Dendritic cell treated with granulocyte-macrophage colony-stimulating factor and Interleukin-4, amounts not matched to agents 40 ng/mL and 50 ng/mL, for 4 days (primary cell): ENCODE measurements at regions of chr1 and their contacts with region 1.

Region 1: DNA sequence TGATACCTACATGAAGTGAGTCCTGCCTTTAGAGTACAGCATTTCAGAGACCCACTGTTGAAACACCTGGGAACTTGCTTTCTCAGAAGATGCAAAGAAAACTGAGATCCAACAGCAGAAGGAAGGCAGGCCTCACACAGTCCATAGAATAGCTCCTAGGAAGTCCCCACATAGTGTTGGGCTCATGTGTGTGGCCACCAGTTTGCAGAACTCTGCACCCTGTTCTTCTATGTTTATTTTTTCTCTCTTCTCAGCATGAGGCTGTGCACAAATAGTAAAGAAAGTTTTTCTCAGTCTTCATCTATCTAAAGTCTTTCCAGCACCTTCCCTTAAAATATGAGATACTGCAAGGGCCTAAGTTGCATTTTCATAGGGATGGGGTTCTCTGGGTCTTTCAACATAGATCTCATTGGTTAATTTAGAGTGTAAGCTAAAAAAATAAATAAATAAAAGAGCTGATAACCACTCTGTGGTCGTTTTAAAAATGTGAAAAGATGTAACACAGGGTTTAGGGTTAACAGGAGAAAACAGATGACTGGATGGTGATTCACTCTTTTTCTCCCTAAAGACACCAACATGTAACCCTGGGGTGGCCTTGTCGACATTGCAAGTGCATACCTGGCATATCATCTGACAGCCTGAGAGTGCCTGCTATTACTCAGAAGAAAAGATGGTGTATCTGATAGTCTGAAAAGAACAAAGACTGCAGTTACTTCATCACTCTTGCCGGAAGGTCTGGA is 94.6 kb downstream of the ZC3H11B start:
- H3K4me3 Mint-ChIP-seq: no peak overlapping the region
- H3K27ac Mint-ChIP-seq: no peak overlapping the region
- H3K4me1 Mint-ChIP-seq: peaks cover 7% of the 10 kb centered on the region
- H3K27me3 Mint-ChIP-seq: peaks cover 9% of the 10 kb centered on the region

Region 2: GRCh38 chr1:219010720-219011119 is 507.6 kb before region 1 on chr1:
- intact Hi-C with region 1: no loop called
- H3K4me3 Mint-ChIP-seq: no peak overlapping the region
- H3K27ac Mint-ChIP-seq: no peak overlapping the region
- H3K4me1 Mint-ChIP-seq: no peaks in the 10 kb centered on the region
- H3K27me3 Mint-ChIP-seq: no peaks in the 10 kb centered on the region

Region 3: DNA sequence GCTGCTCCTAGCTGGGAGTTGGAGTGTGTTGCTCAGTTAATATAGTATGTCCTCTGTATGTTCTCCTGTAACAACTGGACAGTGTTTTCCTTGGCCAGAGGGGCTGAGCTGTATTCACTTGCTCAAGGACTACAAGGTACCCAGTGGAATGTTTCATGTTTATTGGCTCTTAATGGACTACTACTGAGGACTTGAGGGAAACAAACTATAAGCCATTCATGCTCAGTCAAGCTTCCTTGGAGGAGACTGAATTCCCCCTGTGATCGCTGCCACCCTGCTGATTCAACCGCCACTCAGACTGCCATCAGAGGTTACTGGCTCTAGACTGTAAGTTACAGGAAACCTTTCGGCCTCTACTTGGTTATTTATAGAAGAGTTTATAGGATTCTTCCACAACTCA is 72.0 kb before region 1 on chr1:
- intact Hi-C with region 1: loop called (anchors 2 kb)
- H3K4me3 Mint-ChIP-seq: no peak overlapping the region
- H3K27ac Mint-ChIP-seq: no peak overlapping the region
- H3K4me1 Mint-ChIP-seq: peaks cover 17% of the 10 kb centered on the region
- H3K27me3 Mint-ChIP-seq: peaks cover 9% of the 10 kb centered on the region

Region 4: GRCh38 chr1:219460896-219461815 is 57.2 kb before region 1 on chr1:
- intact Hi-C with region 1: no loop called
- H3K4me3 Mint-ChIP-seq: no peak overlapping the region
- H3K27ac Mint-ChIP-seq: peak overlapping the region; percentile 93
- H3K4me1 Mint-ChIP-seq: peaks cover 55% of the 10 kb centered on the region
- H3K27me3 Mint-ChIP-seq: no peaks in the 10 kb centered on the region

Region 5: DNA sequence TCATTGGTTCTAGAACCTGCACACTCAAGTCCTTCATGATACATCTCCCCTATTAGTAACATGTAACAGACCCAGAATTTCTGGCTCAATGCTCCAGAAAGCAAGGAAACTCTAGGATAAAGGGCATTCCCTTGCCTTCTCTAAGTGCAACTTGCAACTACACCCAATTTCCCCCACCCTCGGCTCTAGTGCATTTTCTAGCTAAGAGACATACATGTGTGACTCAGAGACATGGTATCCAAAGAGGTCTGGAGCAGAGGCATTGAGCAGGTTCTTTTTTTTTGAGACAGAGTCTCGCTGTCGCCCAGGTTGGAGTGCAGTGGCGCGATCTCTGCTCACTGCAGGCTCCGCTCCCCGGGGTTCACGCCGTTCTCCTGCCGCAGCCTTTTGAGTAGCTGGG is 38.3 kb before region 1 on chr1:
- intact Hi-C with region 1: no loop called
- H3K4me3 Mint-ChIP-seq: no peak overlapping the region
- H3K27ac Mint-ChIP-seq: no peak overlapping the region
- H3K4me1 Mint-ChIP-seq: no peaks in the 10 kb centered on the region
- H3K27me3 Mint-ChIP-seq: peaks cover 27% of the 10 kb centered on the region

Region 6: DNA sequence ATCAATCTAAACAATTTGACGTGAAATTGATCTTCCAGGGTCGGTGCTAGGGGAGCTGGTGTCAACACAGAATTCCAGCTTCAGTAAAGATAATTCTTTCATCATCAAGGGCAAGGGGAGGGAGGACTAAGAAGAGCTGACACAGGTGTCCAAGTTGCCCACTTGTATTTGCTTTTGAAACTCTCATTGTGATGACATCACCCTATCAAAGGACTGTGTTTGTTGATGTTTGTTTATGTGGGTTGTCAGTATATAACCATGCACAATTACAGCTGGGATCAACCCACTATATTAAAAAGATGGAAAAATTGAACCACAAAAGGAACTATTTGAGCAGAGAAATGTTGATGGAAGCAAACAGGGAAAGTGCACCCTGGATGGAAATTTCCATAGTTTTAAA is 45.8 kb after region 1 on chr1:
- intact Hi-C with region 1: no loop called
- H3K4me3 Mint-ChIP-seq: no peak overlapping the region
- H3K27ac Mint-ChIP-seq: no peak overlapping the region
- H3K4me1 Mint-ChIP-seq: peaks cover 28% of the 10 kb centered on the region
- H3K27me3 Mint-ChIP-seq: peaks cover 33% of the 10 kb centered on the region